Dendritic cell treated with granulocyte-macrophage colony-stimulating factor and Interleukin-4, amounts not matched to agents 40 ng/mL and 50 ng/mL, for 4 days (primary cell): ENCODE measurements at regions of chr17 and their contacts with region 1.

Region 1: GRCh38 chr17:35038453-35038852 is 25.1 kb downstream of the RFFL start:
- H3K4me3 Mint-ChIP-seq: no peak overlapping the region
- H3K27ac Mint-ChIP-seq: no peak overlapping the region
- H3K4me1 Mint-ChIP-seq: peaks cover 10% of the 10 kb centered on the region
- H3K27me3 Mint-ChIP-seq: no peaks in the 10 kb centered on the region

Region 2: GRCh38 chr17:35079551-35080423 is 41.3 kb after region 1 on chr17:
- intact Hi-C with region 1: loop called (anchors 5 kb)
- H3K4me3 Mint-ChIP-seq: no peak overlapping the region
- H3K27ac Mint-ChIP-seq: peak overlapping the region; percentile 4
- H3K4me1 Mint-ChIP-seq: peaks cover 42% of the 10 kb centered on the region
- H3K27me3 Mint-ChIP-seq: no peaks in the 10 kb centered on the region